Activated B cell treated with CpG ODN at 0.5 μM for 24 hours (primary cell): ENCODE measurements at regions of chr5 and their contacts with region 1.

Region 1: GRCh38 chr5:134904630-134905245 is at the start of gene PCBD2:
- DNase-seq: peak; percentile 92
- ATAC-seq: peak; percentile 80
- H3K4me3 Mint-ChIP-seq: peak within 1 kb of the TSS; percentile 91
- H3K27ac Mint-ChIP-seq: peak within 1 kb of the TSS; percentile 96
- H3K4me1 Mint-ChIP-seq: peaks cover 37% of the 10 kb centered on the region
- H3K27me3 Mint-ChIP-seq: no peaks in the 10 kb centered on the region
- CTCF ChIP-seq: no peak
- total RNA-seq, gene PCBD2: 8.4 and 11.5 TPM in 2 replicates

Region 2: DNA sequence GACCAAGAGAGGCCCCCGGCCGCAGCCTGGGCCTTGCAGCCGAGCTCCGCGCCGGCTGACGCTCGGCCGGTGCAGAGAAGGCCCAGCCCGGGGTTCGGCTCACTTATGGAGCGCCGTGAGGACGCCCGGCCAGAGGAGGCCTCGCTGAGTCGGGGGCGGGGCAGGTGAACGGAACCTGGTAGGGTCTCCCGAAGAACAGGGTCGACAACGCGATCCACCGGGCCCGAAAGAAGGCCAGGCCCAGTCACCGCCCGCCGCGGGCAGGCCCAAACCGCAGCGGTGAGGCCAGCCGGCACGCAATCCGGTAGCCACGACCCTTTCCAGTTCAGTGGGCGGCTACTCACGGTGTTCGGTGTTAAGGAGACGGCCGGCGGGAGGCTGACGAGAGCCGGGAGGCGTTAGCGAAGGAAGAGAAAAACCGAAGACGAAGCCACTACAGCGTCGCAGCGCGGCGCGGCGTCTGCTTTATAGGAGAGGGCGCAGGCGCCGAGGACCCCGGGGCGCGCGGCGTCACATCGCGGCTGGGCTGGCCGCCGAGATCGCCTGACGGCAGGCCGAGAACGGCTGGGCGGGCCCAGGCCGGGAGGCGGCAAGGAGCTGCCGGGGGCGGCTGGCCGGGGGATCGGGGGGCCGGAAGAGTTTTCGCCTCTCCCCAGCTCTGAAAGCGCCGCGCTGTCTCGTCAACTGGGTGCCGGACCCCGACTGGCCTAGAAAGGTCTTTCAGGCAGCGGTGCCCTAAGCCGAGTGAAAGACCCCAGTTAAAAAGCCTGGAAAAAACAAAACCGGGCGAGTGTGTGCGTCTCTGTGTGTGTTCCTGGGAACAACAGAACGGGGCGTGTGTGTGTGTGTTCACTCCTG is 728.0 kb before region 1 on chr5 and contains the start of gene SKP1:
- CTCF ChIA-PET with region 1: no interaction called
- POLR2A ChIA-PET with region 1: interaction called, 9 read pairs
- intact Hi-C with region 1: loop called (anchors 1 kb)
- DNase-seq: peak; percentile 91
- ATAC-seq: peak; percentile 86
- H3K4me3 Mint-ChIP-seq: peak within 1 kb of the TSS; percentile 93
- H3K27ac Mint-ChIP-seq: peak within 1 kb of the TSS; percentile 96
- H3K4me1 Mint-ChIP-seq: peaks cover 26% of the 10 kb centered on the region
- H3K27me3 Mint-ChIP-seq: no peaks in the 10 kb centered on the region
- CTCF ChIP-seq: no peak
- total RNA-seq, gene SKP1: 193 and 211 TPM in 2 replicates

Region 3: DNA sequence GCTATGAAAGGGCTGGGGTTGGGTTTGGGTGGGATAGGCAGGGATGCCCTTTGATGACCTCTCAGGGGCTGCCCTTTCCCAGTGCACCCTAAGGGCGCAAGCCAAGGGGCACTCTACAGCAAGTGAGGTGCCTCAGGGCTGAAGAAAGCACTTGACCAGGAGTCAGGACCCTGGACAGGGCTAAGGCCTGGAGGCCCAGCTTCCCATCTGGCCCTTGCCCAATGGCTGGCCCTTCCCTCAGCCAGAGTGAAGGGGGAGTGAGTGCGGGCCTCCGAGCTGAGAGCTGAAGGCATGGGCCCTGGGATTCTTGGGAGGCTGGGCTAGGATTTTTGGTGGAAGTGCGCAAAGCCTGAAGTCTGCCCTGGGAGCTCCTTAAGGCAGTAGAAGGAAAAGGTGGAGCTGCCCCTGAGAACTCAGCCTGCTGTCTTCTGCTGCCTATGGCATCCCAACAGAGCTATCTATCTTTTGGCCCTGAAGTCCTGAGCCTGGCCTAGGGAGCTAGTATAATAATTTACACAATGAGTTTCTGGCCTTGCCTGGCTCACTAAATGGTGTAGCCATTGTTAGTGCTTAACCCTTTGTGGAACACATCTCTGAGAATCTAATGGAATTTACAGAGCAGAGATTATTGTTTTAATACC is 362.9 kb before region 1 on chr5:
- CTCF ChIA-PET with region 1: no interaction called
- POLR2A ChIA-PET with region 1: interaction called, 6 read pairs
- intact Hi-C with region 1: loop called (anchors 5 kb)
- DNase-seq: no peak
- ATAC-seq: no peak
- H3K4me3 Mint-ChIP-seq: peak overlapping the region; percentile 78
- H3K27ac Mint-ChIP-seq: peak overlapping the region; percentile 96
- H3K4me1 Mint-ChIP-seq: peaks cover 86% of the 10 kb centered on the region
- H3K27me3 Mint-ChIP-seq: no peaks in the 10 kb centered on the region
- CTCF ChIP-seq: no peak

Region 4: DNA sequence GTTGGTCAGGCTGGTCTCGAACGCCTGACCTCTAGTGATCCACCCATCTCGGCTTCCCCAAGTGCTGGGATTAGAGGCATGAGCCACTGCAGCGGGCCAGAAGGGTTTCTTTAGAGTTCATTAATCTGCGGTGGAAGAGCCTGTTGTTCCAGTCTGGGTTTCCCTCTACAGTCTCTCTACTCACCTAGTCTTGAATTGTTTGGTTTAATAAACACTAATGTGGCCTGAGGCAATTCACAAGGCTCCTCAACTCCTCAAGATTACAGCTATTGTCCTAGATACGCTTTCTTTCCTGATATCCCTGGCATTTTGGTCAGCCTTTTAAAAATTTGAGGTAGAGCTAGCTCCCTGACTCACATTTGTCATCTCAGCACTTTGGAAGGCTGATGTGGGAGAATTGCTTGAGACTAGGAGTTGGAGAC is 267.6 kb before region 1 on chr5:
- CTCF ChIA-PET with region 1: no interaction called
- POLR2A ChIA-PET with region 1: interaction called, 3 read pairs
- intact Hi-C with region 1: loop called (anchors 1 kb)
- DNase-seq: no peak
- ATAC-seq: no peak
- H3K4me3 Mint-ChIP-seq: no peak overlapping the region
- H3K27ac Mint-ChIP-seq: no peak overlapping the region
- H3K4me1 Mint-ChIP-seq: peaks cover 2% of the 10 kb centered on the region
- H3K27me3 Mint-ChIP-seq: no peaks in the 10 kb centered on the region
- CTCF ChIP-seq: no peak

Region 5: DNA sequence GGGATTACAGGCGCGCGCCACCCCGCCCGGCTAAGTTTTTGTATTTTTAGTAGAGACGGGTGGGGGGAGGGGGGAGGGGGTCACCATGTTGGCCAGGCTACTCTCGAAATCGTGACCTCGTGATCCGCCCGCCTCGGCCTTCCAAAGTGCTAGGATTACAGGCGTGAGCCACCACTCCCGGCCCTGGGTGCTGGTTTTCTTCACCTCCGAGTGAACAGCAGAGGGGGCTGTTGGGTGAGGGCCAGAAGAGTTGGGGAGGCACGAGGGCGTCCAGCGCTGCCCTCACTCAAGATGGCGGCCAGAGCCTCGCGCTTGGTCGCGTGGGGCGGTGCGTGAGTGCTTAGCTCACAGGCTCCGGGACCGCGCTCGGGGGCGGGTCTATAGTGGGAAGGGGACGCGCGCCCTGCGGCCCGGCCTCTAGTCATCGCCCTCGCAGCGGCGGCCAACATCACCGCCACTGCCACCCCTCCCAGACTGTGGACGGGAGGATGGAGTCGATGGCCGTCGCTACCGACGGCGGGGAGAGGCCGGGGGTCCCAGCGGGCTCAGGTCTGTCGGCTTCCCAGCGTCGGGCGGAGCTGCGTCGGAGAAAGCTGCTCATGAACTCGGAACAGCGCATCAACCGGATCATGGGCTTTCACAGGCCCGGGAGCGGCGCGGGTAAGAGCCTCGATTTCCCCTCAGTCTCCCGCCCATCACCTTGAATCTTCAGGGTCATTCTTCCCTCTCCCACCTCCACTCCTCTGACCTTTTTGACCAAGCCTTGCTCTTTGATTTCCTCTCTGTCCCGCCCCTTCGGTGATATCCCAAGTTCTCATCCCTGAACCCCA is 166.4 kb before region 1 on chr5 and contains the start of gene CAMLG:
- CTCF ChIA-PET with region 1: interaction called, 17 read pairs
- POLR2A ChIA-PET with region 1: interaction called, 55 read pairs
- intact Hi-C with region 1: loop called (anchors 1 kb)
- DNase-seq: peak; percentile 94
- ATAC-seq: peak; percentile 97
- H3K4me3 Mint-ChIP-seq: peak within 1 kb of the TSS; percentile 86
- H3K27ac Mint-ChIP-seq: peak within 1 kb of the TSS; percentile 93
- H3K4me1 Mint-ChIP-seq: peaks cover 33% of the 10 kb centered on the region
- H3K27me3 Mint-ChIP-seq: no peaks in the 10 kb centered on the region
- CTCF ChIP-seq: no peak
- total RNA-seq, gene CAMLG: 22.2 and 23.9 TPM in 2 replicates

Region 6: GRCh38 chr5:134784241-134784920 is 120.4 kb before region 1 on chr5:
- CTCF ChIA-PET with region 1: interaction called, 10 read pairs
- POLR2A ChIA-PET with region 1: interaction called, 3 read pairs
- intact Hi-C with region 1: loop called (anchors 1 kb)
- DNase-seq: no peak
- ATAC-seq: no peak
- H3K4me3 Mint-ChIP-seq: no peak overlapping the region
- H3K27ac Mint-ChIP-seq: peak overlapping the region; percentile 6
- H3K4me1 Mint-ChIP-seq: no peaks in the 10 kb centered on the region
- H3K27me3 Mint-ChIP-seq: no peaks in the 10 kb centered on the region
- CTCF ChIP-seq: no peak

Region 7: DNA sequence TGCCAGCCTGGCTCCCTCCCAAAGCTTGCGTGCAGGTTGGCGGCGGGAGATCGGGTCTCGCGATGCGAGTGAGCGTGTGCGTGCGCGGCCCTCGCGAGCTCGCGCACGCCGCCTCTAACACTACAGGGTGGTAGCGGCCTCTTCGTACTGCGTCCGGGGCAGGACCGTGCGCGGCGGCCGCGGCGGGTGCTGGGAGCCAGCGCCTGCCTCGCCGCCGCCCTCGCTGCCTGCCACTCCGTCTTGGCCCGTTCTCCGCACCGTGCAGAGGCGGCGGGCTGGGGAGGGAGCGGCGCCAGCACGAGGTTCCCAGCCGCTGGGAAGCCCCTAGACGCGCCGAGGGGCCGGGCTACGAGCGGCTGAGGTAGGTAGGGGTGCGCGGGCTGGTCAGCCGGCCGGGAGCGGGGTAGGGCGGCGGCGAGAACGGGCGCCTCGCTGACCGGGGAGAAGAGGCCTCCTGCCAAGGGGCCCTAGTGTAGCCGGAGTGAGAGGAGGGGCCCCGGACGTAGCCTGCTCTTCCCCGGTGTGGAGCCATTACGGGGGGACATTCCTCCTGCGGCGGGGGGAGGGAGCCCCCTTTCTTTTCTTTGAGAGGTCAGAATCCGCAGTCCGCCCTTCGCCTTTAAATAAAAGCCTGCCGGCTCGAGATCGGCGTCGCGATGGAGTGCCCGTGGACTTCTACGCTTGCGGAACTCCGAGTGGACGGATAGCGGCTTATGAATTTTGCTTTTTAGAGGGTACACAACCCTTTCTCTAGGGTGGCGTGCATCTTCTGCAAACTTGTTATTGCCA is 58.7 kb before region 1 on chr5 and contains the start of gene C5orf24:
- CTCF ChIA-PET with region 1: interaction called, 9 read pairs
- POLR2A ChIA-PET with region 1: interaction called, 45 read pairs
- intact Hi-C with region 1: loop called (anchors 1 kb)
- DNase-seq: peak; percentile 86
- ATAC-seq: peak; percentile 92
- H3K4me3 Mint-ChIP-seq: peak within 1 kb of the TSS; percentile 83
- H3K27ac Mint-ChIP-seq: peak within 1 kb of the TSS; percentile 95
- H3K4me1 Mint-ChIP-seq: peaks cover 26% of the 10 kb centered on the region
- H3K27me3 Mint-ChIP-seq: no peaks in the 10 kb centered on the region
- CTCF ChIP-seq: no peak
- total RNA-seq, gene C5orf24: 32.0 and 36.1 TPM in 2 replicates

Region 8: GRCh38 chr5:135337064-135337463 is 432.3 kb after region 1 on chr5:
- CTCF ChIA-PET with region 1: no interaction called
- POLR2A ChIA-PET with region 1: no interaction called
- intact Hi-C with region 1: no loop called
- DNase-seq: no peak
- ATAC-seq: no peak
- H3K4me3 Mint-ChIP-seq: no peak overlapping the region
- H3K27ac Mint-ChIP-seq: no peak overlapping the region
- H3K4me1 Mint-ChIP-seq: no peaks in the 10 kb centered on the region
- H3K27me3 Mint-ChIP-seq: no peaks in the 10 kb centered on the region
- CTCF ChIP-seq: no peak